Panc1 (cell line): ENCODE measurements at regions of chr3 and their contacts with region 1.

Region 1: DNA sequence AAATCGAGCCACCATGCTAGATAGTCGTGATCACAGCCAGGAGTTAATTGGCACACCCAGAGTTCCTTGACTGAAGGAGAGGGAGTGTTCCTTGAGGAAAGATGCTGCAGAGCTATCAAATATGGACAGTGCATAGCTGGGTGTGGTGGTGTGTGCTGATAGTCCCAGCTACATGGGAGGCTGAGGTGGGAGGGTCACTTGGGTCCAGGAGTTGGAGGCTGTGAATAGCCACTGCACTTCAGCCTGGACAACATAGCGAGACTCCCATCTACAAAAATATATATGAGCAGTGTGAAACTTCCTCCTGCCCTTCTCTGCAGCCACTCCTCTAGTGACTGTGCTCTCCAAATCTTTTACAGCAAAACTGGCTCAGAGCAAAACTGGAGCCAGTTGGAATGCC is 10.0 kb upstream of the USP13 start:
- DNase-seq: no peak
- ATAC-seq: no peak
- H3K4me3 ChIP-seq: no peak overlapping the region
- H3K27ac ChIP-seq: no peak overlapping the region
- H3K4me1 ChIP-seq: no peaks in the 10 kb centered on the region
- H3K27me3 ChIP-seq: no peaks in the 10 kb centered on the region
- CTCF ChIP-seq: no peak

Region 2: GRCh38 chr3:179819379-179819778 is 176.5 kb after region 1 on chr3:
- CTCF ChIA-PET with region 1: interaction called, 10 read pairs
- POLR2A ChIA-PET with region 1: no interaction called
- in situ Hi-C with region 1: no loop called
- intact Hi-C with region 1: no loop called
- DNase-seq: no peak
- ATAC-seq: no peak
- H3K4me3 ChIP-seq: no peak overlapping the region
- H3K27ac ChIP-seq: no peak overlapping the region
- H3K4me1 ChIP-seq: no peaks in the 10 kb centered on the region
- H3K27me3 ChIP-seq: peaks cover 3% of the 10 kb centered on the region; the same call in 1 of the 2 replicates
- CTCF ChIP-seq: no peak